Posterior vena cava (tissue), 2 donors: ENCODE measurements at regions of chr17 and their contacts with region 1.

Region 1: GRCh38 chr17:16285957-16286640 is 67.2 kb downstream of the CENPV start:
- DNase-seq: peak; percentile 95

Region 2: DNA sequence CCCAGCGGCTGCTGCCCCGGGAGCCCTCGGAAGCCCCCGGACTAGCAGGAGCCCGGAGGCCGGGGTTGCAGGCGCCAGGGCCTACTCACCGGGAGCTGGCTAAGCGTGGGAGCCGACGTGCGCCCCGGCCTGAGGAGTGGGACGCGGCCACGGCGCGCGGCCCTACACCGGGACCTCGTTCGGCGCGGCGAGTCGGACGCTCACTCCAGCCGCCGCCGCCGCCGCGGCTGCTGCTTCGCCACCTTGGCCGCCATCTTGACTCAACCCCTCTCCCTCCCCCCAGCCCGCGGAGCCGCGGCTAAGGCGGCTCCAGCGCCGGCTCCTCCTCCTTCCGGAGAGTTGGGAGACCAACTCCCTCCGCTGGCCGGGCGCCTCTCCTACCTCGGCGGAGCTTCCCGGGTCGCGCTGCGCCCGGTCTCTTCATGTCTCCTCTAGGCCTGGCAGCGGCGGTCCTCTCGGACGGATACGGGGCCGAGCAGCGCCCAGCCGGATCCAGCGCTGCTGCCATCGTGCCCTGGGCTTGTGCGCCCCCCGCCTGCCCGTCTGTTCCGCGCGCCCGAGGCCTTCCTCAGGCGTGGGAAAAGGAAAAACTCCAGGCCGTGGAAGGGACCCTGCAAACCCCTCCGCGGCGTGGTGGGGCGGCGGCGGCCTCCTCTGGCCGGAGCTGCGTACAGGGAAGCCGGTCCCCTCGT is 70.7 kb before region 1 on chr17 and contains the start of gene NCOR1:
- intact Hi-C with region 1: loop called in 1 of 2 experiments (anchors 10 kb)
- DNase-seq: peak; percentile 98
- total RNA-seq, gene NCOR1: 97.0 to 108 TPM

Region 3: GRCh38 chr17:16342979-16343378 is 56.9 kb after region 1 on chr17:
- intact Hi-C with region 1: loop called in 1 of 2 experiments (anchors 10 kb)
- DNase-seq: peak; percentile 83